Naive thymus-derived CD4-positive, alpha-beta T cell (primary cell): ENCODE measurements at regions of chr17 and their contacts with region 1.

Region 1: DNA sequence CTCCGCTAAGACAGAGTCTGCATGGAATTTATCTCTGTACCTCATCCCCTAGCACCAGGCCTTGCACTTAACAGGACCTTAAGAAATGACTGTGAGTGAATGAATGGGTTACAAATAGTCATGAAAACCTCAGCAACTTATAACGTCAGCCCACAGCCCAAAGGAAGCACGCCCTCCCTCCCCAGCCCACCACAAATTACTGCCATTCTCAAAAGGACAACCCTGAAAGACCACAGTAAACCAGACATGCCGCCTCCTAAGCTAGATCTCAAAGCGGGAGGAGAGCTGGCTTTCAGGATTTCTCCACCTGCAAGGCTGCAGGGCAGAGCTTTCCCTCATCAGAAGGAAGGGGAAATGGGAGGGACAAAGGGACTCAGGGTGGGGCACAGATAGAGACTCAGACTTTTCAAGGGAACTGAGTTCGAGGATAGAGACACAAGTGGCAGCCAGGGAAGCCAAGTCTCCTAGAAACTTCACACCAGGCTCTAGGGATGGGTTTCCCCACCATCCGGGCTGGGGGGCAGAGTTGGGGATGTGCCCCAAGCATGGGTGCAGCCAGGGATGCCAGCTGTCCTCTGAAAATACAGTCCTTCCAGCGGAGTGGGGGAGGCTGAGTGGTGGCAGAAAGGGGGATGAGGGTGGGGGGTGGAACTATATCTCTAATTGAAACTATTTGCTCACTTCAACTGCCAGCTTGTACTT is 56.7 kb downstream of the PLXDC1 start:
- DNase-seq: peak in 7 of 9 donors; percentile 28 to 62 (median 49)
- ATAC-seq: peak; percentile 60
- H3K4me3 ChIP-seq: peak overlapping the region; percentile 20
- H3K4me3 Mint-ChIP-seq: peak overlapping the region; percentile 61 to 92 (median 82)
- H3K27ac ChIP-seq: peak overlapping the region; percentile 64
- H3K27ac Mint-ChIP-seq: peak overlapping the region; percentile 81 to 97 (median 95)
- H3K4me1 ChIP-seq: peaks cover 60 to 88% of the 10 kb centered on the region in 2 donors
- H3K4me1 Mint-ChIP-seq: peaks cover 64 to 95% (median 90%) of the 10 kb centered on the region in 7 donors
- H3K27me3 ChIP-seq: no peaks in the 10 kb centered on the region
- H3K27me3 Mint-ChIP-seq: peaks cover 0 to 3% (median 0%) of the 10 kb centered on the region in 5 donors

Region 2: DNA sequence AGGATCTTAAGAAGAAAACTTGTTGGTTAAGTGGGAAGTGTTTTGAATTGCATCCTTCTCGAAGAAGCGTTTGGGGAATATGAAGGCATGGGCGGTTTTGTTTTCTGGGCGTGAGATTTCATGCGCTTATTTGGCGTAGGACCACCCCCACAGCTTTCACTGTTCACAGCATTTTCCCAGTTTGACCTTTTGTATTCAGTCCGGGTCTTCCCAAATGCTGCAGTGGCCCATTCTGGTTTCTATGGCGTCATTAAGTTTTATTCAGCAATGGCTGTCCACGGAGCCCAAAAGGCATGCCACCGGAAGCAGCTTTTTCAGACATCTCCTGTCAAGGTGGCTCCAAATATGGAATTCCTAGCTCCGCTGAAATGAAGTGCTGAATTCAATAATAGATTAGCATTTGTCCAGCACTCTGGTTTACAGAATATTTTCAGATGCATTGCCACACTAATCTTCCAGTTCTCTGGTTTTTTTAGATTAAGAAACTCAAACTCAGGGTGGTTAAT is 37.0 kb before region 1 on chr17:
- CTCF ChIA-PET with region 1: interaction called, 4 read pairs
- POLR2A ChIA-PET with region 1: no interaction called
- intact Hi-C with region 1: loop called (anchors 2 kb)
- DNase-seq: no peak
- ATAC-seq: no peak
- H3K4me3 ChIP-seq: peak overlapping the region; percentile 65
- H3K4me3 Mint-ChIP-seq: peak overlapping the region; percentile 66 to 90 (median 84)
- H3K27ac ChIP-seq: no peak overlapping the region
- H3K27ac Mint-ChIP-seq: peak overlapping the region in 6 of 9 donors; percentile 25 to 87 (median 68)
- H3K4me1 ChIP-seq: no peaks in the 10 kb centered on the region
- H3K4me1 Mint-ChIP-seq: peaks cover 6 to 28% (median 17%) of the 10 kb centered on the region in 7 donors
- H3K27me3 ChIP-seq: no peaks in the 10 kb centered on the region
- H3K27me3 Mint-ChIP-seq: peaks cover 0 to 10% (median 0%) of the 10 kb centered on the region in 5 donors

Region 3: DNA sequence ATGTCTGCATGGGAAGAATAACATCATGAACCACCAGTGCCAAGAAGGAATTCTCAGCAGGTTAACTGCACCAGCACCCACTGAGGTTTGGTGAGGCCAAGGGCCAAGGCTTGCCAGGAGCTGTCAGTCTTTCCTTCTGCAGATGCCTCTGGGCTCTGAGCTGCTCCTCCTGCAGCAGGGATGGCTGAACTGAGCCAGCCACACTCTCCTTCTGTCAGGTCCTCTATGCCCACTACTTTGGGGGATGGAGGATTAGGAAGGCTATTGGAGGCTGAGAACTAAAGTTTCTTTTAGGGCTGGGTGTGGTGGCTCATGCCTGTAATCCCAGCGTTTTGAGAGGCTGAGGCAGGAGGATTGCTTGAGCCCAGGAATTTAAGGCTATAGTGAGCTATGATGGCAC is 14.9 kb before region 1 on chr17:
- CTCF ChIA-PET with region 1: interaction called, 11 read pairs
- POLR2A ChIA-PET with region 1: interaction called, 5 read pairs
- intact Hi-C with region 1: no loop called
- DNase-seq: no peak
- ATAC-seq: no peak
- H3K4me3 ChIP-seq: no peak overlapping the region
- H3K4me3 Mint-ChIP-seq: no peak overlapping the region
- H3K27ac ChIP-seq: no peak overlapping the region
- H3K27ac Mint-ChIP-seq: no peak overlapping the region
- H3K4me1 ChIP-seq: no peaks in the 10 kb centered on the region
- H3K4me1 Mint-ChIP-seq: peaks cover 0 to 8% (median 0%) of the 10 kb centered on the region in 7 donors
- H3K27me3 ChIP-seq: no peaks in the 10 kb centered on the region
- H3K27me3 Mint-ChIP-seq: peaks cover 0 to 3% (median 0%) of the 10 kb centered on the region in 5 donors